AG04449 (cell line): ENCODE measurements at regions of chr10 and their contacts with region 1.

Region 1: DNA sequence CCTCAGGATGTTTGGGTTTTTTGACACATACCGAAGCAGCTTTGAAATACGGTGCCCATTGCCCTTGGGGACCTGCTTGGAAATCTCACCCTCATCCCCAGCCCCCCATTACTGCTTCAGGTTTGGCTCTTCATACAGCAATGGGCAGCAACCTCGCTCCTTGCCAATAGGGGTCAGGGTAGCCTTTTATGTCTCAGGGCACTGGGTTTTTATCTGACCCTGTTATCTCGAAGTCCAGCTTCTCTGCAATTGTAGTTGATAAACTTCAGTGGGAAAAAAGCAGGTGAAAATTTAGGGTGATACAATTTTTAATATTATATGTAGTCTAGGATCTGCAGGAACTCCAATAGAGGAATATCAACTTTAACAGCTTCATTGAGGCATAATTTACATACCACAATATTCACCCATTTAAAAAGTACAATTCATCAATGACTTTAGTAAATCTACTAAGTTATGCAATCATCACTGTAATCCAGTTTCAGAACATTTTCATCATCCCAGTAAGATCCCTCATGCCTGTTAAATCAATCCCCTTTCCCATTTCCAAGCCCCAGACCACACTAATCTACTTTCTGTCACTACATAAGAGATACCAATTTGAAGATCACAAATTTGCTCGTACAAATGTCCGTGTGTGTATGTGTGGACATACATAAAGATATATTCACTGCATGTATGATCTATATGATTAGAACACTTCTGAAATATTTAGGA is 386.2 kb downstream of the KCNMA1 start:
- DNase-seq: no peak
- H3K4me3 ChIP-seq: no peak overlapping the region
- CTCF ChIP-seq: peak; percentile 68

Region 2: GRCh38 chr10:77212632-77213031 is 38.8 kb before region 1 on chr10:
- CTCF ChIA-PET with region 1: no interaction called
- POLR2A ChIA-PET with region 1: no interaction called
- DNase-seq: no peak
- H3K4me3 ChIP-seq: no peak overlapping the region
- CTCF ChIP-seq: no peak

Region 3: GRCh38 chr10:77236700-77237099 is 14.8 kb before region 1 on chr10:
- CTCF ChIA-PET with region 1: interaction called, 13 read pairs
- POLR2A ChIA-PET with region 1: no interaction called
- DNase-seq: no peak
- H3K4me3 ChIP-seq: no peak overlapping the region
- CTCF ChIP-seq: no peak

Region 4: GRCh38 chr10:77328272-77328816 is 76.9 kb after region 1 on chr10:
- CTCF ChIA-PET with region 1: no interaction called
- POLR2A ChIA-PET with region 1: no interaction called
- DNase-seq: no peak
- H3K4me3 ChIP-seq: no peak overlapping the region
- CTCF ChIP-seq: no peak

Region 5: GRCh38 chr10:77456414-77456813 is 205.0 kb after region 1 on chr10:
- CTCF ChIA-PET with region 1: no interaction called
- POLR2A ChIA-PET with region 1: no interaction called
- DNase-seq: no peak
- H3K4me3 ChIP-seq: no peak overlapping the region
- CTCF ChIP-seq: peak; percentile 2